Dorsolateral prefrontal cortex (tissue), 120 donors: ENCODE measurements at regions of chr20 and their contacts with region 1.

Region 1: DNA sequence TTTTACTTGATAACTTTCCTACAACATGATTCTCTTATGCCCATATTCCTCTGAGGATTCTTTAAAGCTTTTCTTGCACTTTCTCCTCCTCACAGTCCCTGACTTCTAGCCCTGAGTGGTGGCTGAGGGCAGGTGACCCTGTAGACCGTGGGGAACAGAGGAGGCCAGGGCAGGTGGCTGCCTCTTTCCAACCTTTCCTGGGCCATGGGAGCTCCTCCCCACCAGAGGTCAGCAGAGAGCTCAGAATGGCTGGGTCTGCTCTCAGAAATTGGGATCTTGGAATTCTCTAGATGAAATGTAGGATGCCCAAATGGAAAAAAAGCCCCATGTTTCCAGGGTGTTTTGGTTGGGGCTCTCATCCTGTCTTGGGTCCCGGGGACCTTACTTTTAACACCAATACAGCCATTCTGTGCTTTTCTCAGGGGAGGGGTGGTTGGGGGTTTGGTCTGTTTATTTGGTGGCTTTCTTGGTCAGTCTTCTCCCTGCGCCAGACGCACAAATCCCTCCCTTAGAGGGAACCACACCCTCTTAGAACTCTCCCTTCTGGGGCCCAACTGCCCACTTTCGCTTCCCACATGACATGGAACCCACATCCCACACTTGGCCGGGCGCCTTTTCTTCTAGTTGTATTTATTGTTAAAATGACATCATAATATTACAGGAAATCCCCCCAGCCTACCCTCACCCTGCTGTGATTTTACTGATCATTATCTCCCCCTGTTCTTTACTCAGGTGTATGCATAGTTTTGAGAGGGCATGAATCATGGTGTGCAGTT is 17.9 kb downstream of the GNAS start:
- DNase-seq: peak in 7 of 10 donors; percentile 52 to 82 (median 61)
- H3K4me3 ChIP-seq: no peak overlapping the region
- H3K27ac ChIP-seq: no peak overlapping the region
- H3K27me3 ChIP-seq: peaks cover 0 to 6% (median 0%) of the 10 kb centered on the region in 45 donors
- CTCF ChIP-seq: peak; percentile 76 to 98 (median 92)

Region 2: DNA sequence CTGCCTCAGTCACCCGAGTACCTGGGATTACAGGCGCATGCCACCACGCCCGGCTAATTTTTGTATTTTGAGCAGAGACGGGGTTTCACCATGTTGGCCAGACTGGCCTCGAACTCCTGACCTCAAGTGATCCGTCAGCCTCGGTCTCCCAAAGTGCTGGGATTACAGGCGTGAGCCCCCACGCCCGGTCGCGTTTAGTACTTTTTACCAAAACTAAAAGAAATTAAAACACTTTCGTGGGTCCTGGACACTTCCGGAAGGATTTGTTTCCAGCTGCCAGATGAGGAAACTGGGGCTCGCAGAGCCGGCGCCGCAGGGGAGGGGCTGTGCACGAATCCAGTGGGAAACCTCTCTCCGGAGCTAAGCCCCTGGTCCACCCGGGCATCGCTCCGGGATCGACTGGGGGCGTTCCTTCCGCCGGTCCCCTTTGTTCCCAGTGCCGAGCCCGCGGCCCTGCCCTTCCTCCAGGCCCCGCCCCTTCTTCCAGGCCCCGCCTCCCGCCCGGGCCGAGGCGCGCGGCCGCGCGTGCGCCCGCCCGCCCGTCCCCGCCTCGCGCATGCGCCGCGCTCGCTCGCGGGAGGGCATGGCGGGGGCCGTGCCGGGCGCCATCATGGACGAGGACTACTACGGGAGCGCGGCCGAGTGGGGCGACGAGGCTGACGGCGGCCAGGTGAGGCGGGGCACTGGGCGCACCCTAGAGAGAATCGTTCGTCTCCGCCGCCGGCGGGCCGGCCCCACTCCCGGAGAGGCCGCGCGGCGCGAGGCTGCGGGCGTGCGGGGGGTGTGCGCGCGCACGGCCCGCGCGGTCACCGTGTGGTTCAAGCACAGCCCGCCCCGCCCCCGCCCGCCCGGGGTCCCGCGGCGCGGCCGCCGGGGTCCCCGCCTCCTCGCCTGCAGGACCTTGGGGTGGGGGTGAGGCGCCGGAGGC is 110.5 kb after region 1 on chr20 and contains the start of gene NELFCD:
- intact Hi-C with region 1: no loop called
- DNase-seq: peak; percentile 56 to 87 (median 72)
- H3K4me3 ChIP-seq: peak within 1 kb of the TSS; percentile 57 to 92 (median 77)
- H3K27ac ChIP-seq: peak within 1 kb of the TSS in 58 of 59 donors; percentile 14 to 94 (median 82)
- H3K27me3 ChIP-seq: no peaks in the 10 kb centered on the region
- CTCF ChIP-seq: peak in 2 of 56 donors; percentile 7 to 9
- total RNA-seq, gene NELFCD: 46.8 to 90.1 (median 64.8) TPM

Region 3: DNA sequence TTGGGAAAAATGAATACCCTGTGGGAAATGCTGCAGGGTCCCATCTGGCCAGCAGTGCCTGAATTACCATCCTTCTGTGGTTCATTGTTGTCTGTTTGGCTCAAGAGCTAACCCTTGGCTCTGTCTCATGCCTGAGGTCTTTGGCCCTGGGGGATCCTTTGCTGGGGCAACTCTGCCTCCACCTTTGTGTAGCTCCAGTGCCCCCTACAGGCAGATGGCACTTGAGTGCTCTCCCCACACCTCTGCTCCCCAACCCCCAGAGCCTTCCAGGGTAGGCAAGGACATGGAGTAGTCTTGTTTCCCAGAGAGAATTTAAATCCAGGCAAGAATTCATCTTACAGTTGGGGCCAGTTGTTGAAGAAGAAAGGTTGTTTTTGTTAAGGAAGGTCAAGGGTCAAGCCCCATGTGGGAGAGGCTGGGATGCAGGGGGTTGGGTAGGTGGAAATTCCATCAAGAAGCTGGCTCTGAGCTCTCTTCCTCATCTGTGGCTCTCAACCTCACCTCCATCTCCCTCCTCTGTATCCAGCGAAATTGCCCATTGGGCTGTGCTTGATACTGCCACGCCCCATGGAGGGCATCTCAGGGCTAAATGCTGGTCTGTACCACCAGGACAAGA is 337.4 kb after region 1 on chr20:
- intact Hi-C with region 1: loop called in 1 of 2 experiments (anchors 2 kb)
- DNase-seq: peak in 8 of 10 donors; percentile 52 to 75 (median 68)
- H3K4me3 ChIP-seq: no peak overlapping the region
- H3K27ac ChIP-seq: no peak overlapping the region
- H3K27me3 ChIP-seq: no peaks in the 10 kb centered on the region
- CTCF ChIP-seq: peak in 55 of 56 donors; percentile 41 to 84 (median 68)

Region 4: GRCh38 chr20:59222253-59223181 is 352.1 kb after region 1 on chr20:
- intact Hi-C with region 1: loop called (anchors 2 to 5 kb)
- DNase-seq: peak; percentile 61 to 87 (median 74)
- H3K4me3 ChIP-seq: peak overlapping the region; percentile 21 to 83 (median 64)
- H3K27ac ChIP-seq: peak overlapping the region in 42 of 59 donors; percentile 4 to 81 (median 52)
- H3K27me3 ChIP-seq: no peaks in the 10 kb centered on the region
- CTCF ChIP-seq: peak; percentile 71 to 98 (median 93)

Region 5: DNA sequence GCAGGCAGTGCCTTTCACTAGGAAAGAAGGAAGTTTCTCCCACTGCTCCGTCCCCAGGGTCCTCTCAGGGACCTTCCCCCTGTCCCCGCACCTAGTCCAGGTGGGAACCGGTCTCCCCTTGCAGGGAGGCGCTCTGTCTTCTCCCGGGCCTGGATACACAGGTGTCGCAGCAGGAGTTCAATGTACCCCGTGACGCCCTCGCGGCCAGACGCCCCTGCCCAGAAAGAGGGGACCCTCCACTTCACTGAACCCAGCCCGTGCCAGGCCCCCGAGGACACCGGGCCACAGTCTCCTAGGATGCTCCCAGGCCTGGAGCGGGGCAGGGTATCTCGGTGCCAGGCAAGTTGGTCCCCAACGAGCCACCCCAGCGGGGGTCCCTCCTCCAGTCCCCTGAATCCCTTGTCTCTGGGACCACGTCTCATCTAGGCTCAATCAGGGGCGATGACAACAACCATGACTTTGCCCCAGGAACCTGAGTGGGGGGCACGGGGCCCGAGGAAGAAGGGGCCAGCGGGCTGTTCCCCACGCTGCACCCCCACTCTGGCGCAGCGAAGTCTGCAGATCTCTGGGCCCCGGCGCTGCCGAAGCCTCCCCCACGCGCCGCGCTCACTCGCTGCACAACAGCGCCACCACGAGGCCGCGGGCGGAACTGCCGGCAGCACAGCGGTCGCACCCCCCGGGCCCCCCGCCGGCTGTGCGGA is 533.0 kb after region 1 on chr20:
- intact Hi-C with region 1: loop called (anchors 2 kb)
- DNase-seq: peak in 9 of 10 donors; percentile 24 to 79 (median 58)
- H3K4me3 ChIP-seq: peak overlapping the region in 57 of 59 donors; percentile 1 to 59 (median 42)
- H3K27ac ChIP-seq: peak overlapping the region in 31 of 59 donors; percentile 1 to 74 (median 32)
- H3K27me3 ChIP-seq: peaks cover 0 to 93% (median 45%) of the 10 kb centered on the region in 45 donors
- CTCF ChIP-seq: peak; percentile 82 to 100 (median 98)

Region 6: DNA sequence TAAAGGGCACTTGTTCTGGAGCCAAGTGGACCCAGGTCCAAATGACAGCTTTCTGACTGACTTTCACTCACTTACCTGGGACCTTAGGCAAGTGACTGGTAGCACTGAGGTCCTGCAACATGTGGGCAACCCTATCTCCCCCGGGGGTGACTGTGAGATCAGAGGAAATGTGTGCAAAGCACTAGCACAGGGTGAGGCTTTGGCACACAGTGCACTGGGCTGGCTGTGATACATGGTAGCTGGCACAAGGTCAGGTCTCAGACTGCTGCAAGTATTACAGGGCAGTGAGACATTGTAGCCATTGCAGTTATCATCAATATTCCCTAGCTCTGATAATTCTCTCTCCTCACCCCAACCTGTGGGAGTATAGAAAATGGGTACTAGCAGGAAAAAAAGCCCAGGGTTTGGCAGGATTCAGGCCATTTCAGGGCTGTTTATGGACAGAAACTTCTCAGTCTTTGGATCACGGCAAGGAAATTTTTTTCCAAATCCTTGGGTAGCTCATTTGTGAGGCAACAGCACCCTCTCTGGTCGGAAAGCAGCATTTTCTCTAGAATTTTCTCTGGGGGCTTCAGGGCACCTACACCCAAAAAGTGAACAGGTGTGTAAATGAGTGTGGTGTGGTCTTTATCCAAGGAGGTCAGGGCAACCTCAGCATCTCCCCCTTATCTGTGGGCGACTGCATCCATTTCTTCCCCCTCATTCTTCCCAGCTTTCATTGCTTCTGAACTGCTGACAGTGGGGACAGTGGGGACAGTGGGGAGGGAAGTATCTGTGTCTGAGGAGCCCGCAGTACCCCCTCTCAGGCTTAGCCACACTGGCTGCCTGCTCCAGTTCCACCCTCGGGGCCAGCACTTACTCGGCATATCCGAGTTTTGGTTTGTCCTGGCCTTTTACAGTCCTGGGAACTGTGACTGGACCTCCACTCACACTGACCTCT is 585.2 kb after region 1 on chr20:
- intact Hi-C with region 1: loop called in 1 of 2 experiments (anchors 2 kb)
- DNase-seq: peak in 2 of 10 donors; percentile 34 to 60
- H3K4me3 ChIP-seq: peak overlapping the region in 1 of 59 donors; percentile 17
- H3K27ac ChIP-seq: peak overlapping the region in 3 of 59 donors; percentile 9 to 57 (median 28)
- H3K27me3 ChIP-seq: peaks cover 0 to 18% (median 0%) of the 10 kb centered on the region in 45 donors
- CTCF ChIP-seq: peak; percentile 31 to 81 (median 66)

Region 7: GRCh38 chr20:59495894-59496510 is 625.6 kb after region 1 on chr20:
- intact Hi-C with region 1: loop called (anchors 2 to 10 kb)
- DNase-seq: peak; percentile 62 to 79 (median 74)
- H3K4me3 ChIP-seq: no peak overlapping the region
- H3K27ac ChIP-seq: no peak overlapping the region
- H3K27me3 ChIP-seq: peaks cover 0 to 37% (median 8%) of the 10 kb centered on the region in 45 donors
- CTCF ChIP-seq: peak in 55 of 56 donors; percentile 74 to 94 (median 86)